Ovary (tissue), 10 donors: ENCODE measurements at regions of chr16 and their contacts with region 1.

Region 1: GRCh38 chr16:50826797-50827316 is 85.0 kb downstream of the CYLD start:
- DNase-seq: no peak
- H3K4me3 ChIP-seq: no peak overlapping the region
- H3K27ac ChIP-seq: no peak overlapping the region
- H3K4me1 ChIP-seq: no peaks in the 10 kb centered on the region
- H3K27me3 ChIP-seq: no peaks in the 10 kb centered on the region
- CTCF ChIP-seq: no peak
- EP300 ChIP-seq: no peak
- POLR2A ChIP-seq: no peak

Region 2: GRCh38 chr16:48965386-48965785 is 1861.5 kb before region 1 on chr16:
- intact Hi-C with region 1: loop called in 1 of 4 experiments (anchors 5 kb)
- DNase-seq: no peak
- H3K4me3 ChIP-seq: no peak overlapping the region
- H3K27ac ChIP-seq: no peak overlapping the region
- H3K4me1 ChIP-seq: no peaks in the 10 kb centered on the region
- H3K27me3 ChIP-seq: no peaks in the 10 kb centered on the region
- CTCF ChIP-seq: no peak
- EP300 ChIP-seq: no peak
- POLR2A ChIP-seq: no peak

Region 3: GRCh38 chr16:49399594-49400364 is 1427.1 kb before region 1 on chr16:
- intact Hi-C with region 1: loop called in 1 of 4 experiments (anchors 5 kb)
- DNase-seq: no peak
- H3K4me3 ChIP-seq: no peak overlapping the region
- H3K27ac ChIP-seq: no peak overlapping the region
- H3K4me1 ChIP-seq: no peaks in the 10 kb centered on the region
- H3K27me3 ChIP-seq: no peaks in the 10 kb centered on the region
- CTCF ChIP-seq: no peak
- EP300 ChIP-seq: no peak
- POLR2A ChIP-seq: no peak

Region 4: GRCh38 chr16:50747207-50747956 is 79.5 kb before region 1 on chr16:
- intact Hi-C with region 1: no loop called
- DNase-seq: no peak
- H3K4me3 ChIP-seq: no peak overlapping the region
- H3K27ac ChIP-seq: no peak overlapping the region
- H3K4me1 ChIP-seq: peaks cover 1% of the 10 kb centered on the region
- H3K27me3 ChIP-seq: no peaks in the 10 kb centered on the region
- CTCF ChIP-seq: no peak
- EP300 ChIP-seq: no peak
- POLR2A ChIP-seq: no peak